Endothelial cell of umbilical vein (primary cell): ENCODE measurements at regions of chr3 and their contacts with region 1.

Region 1: GRCh38 chr3:38136777-38137614 is at the start of gene ACAA1:
- DNase-seq: peak; percentile 99
- H3K4me3 ChIP-seq: peak within 1 kb of the TSS; percentile 27 to 71 (median 67)
- H3K27ac ChIP-seq: peak within 1 kb of the TSS; percentile 45
- H3K4me1 ChIP-seq: peaks cover 24% of the 10 kb centered on the region
- H3K27me3 ChIP-seq: no peaks in the 10 kb centered on the region
- CTCF ChIP-seq: no peak
- POLR2A ChIP-seq: peak; percentile 90
- total RNA-seq, gene ACAA1: 46.9 and 52.1 TPM in 2 replicates

Region 2: GRCh38 chr3:37855363-37855970 is 281.5 kb before region 1 on chr3:
- CTCF ChIA-PET with region 1: no interaction called
- POLR2A ChIA-PET with region 1: no interaction called
- dilution Hi-C with region 1: no loop called
- intact Hi-C with region 1: loop called (anchors 10 kb)
- DNase-seq: peak; percentile 77
- H3K4me3 ChIP-seq: no peak overlapping the region
- H3K27ac ChIP-seq: no peak overlapping the region
- H3K4me1 ChIP-seq: peaks cover 9% of the 10 kb centered on the region
- H3K27me3 ChIP-seq: no peaks in the 10 kb centered on the region
- CTCF ChIP-seq: peak; percentile 86 to 87
- POLR2A ChIP-seq: no peak

Region 3: DNA sequence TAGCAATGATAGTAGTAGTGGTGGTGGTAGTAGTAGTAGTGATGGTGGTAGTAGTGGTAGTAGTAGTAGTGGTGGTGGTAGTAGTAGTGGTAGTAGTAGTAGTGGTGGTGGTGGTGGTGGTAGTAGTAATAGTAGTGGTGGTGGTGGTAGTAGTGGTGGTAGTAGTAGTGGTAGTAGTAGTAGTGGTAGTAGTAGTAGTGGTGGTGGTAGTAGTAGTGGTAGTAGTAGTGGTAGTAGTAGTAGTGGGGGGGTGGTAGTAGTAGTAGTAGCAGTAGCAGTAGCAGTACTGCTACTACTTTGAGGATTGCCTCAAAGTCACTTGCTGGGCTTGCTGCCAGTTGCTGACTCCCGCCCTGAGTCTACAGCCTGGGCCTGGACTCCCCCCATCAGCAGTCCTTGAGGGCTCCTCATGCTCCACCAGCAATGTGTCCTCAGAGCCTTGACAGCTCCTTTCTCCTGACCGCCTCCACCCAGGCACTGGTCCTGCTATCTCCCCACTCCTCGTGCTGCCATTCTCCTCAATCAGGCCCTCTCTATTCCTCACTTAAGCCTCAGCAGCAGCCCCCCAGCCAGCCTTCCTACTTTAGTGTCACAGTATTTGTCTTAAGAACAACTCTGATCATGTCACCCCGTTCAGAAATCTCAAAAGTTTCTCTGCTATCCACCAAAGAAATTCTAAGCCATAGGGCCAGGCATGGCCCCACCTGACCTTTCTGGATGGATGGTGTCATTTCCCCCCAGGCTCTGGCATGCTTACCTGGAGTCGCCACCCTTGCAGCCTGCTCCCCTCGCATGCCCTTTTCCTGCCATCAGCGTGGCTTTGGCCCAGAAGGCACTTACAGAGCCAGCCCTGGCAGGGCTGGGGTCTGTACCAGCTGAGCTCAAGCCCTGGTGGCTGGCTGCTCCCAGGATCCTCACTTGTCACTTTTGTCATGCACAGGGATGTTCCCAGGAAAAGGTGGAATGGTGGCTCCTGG is 52.4 kb before region 1 on chr3:
- CTCF ChIA-PET with region 1: no interaction called
- POLR2A ChIA-PET with region 1: no interaction called
- dilution Hi-C with region 1: no loop called
- intact Hi-C with region 1: no loop called
- DNase-seq: no peak
- H3K4me3 ChIP-seq: no peak overlapping the region
- H3K27ac ChIP-seq: no peak overlapping the region
- H3K4me1 ChIP-seq: no peaks in the 10 kb centered on the region
- H3K27me3 ChIP-seq: peaks cover 0 to 2% of the 10 kb centered on the region in 2 experiments
- CTCF ChIP-seq: no peak
- POLR2A ChIP-seq: no peak

Region 4: DNA sequence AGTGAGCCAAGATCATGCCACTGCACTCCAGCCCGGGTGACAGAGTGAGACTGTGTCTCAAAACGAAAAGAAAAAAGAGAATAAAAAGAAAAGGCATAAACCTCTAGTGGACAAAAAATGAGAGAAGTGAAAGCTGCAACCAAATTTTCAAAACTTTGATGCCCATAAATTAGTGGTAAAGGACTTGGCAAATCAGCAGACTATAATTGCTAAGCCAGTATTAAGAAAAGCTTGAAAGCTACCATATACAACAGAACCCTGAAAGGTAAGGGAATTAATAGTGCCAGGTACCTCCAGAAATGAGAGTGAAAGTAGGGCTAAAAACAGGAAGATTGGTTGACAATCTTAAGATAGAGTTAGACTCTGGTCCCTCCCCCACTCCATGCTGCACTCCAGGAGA is 95.7 kb after region 1 on chr3:
- CTCF ChIA-PET with region 1: no interaction called
- POLR2A ChIA-PET with region 1: no interaction called
- dilution Hi-C with region 1: no loop called
- intact Hi-C with region 1: loop called (anchors 5 kb)
- DNase-seq: no peak
- H3K4me3 ChIP-seq: no peak overlapping the region
- H3K27ac ChIP-seq: no peak overlapping the region
- H3K4me1 ChIP-seq: peaks cover 11% of the 10 kb centered on the region
- H3K27me3 ChIP-seq: no peaks in the 10 kb centered on the region
- CTCF ChIP-seq: no peak
- POLR2A ChIP-seq: no peak

Region 5: GRCh38 chr3:38297947-38298711 is 161.1 kb after region 1 on chr3:
- CTCF ChIA-PET with region 1: interaction called, 13 read pairs
- POLR2A ChIA-PET with region 1: no interaction called
- dilution Hi-C with region 1: no loop called
- intact Hi-C with region 1: loop called (anchors 5 kb)
- DNase-seq: peak; percentile 33
- H3K4me3 ChIP-seq: no peak overlapping the region
- H3K27ac ChIP-seq: no peak overlapping the region
- H3K4me1 ChIP-seq: no peaks in the 10 kb centered on the region
- H3K27me3 ChIP-seq: no peaks in the 10 kb centered on the region
- CTCF ChIP-seq: peak; percentile 26 to 36
- POLR2A ChIP-seq: no peak

Region 6: DNA sequence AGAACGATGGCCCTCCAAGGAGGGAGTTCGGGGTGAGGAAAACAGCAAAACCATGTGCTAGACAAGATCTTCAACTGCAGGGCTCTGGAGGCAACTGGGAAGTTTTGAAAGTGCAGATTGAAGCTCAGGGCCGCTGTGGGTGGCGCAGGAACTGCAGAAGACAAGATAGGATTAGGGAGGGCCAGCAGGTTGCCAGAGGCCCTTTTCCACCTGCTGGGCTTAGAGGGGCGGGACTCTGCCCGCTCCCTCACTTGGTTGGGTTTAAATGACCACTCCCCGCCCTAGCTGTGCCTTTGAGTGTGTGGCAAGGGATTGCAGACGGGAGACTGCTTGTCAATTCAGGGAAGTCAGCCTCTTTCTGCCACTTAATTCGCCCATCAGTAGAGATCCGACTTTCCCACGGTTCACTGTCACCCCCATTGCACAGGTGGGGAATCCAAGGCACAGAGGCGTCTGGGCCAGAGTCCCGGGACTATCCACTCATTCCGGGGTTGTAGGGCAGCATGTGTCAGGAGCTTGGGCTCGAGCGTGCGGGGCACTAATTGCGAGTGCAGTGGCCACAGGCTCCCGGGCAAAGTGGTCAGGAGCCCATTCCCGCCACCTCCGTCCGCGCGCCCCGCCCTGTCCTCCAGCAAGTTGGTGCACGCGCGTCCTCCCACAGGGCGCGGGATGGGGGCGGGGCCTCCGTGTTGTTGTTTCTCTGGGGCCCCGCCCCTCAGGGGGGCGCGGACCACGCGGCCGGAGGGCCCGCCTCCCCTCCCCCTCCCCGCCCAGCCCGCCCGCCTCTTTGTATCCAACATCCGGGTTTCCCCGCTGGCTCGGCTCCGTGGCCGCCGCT is 316.3 kb after region 1 on chr3 and contains the start of gene ACVR2B:
- CTCF ChIA-PET with region 1: interaction called, 4 read pairs
- POLR2A ChIA-PET with region 1: no interaction called
- dilution Hi-C with region 1: no loop called
- intact Hi-C with region 1: loop called (anchors 1 kb)
- DNase-seq: peak; percentile 69
- H3K4me3 ChIP-seq: peak within 1 kb of the TSS; percentile 37 to 85 (median 68)
- H3K27ac ChIP-seq: peak within 1 kb of the TSS; percentile 45
- H3K4me1 ChIP-seq: no peaks in the 10 kb centered on the region
- H3K27me3 ChIP-seq: no peaks in the 10 kb centered on the region
- CTCF ChIP-seq: no peak
- POLR2A ChIP-seq: no peak
- total RNA-seq, gene ACVR2B: 4.9 and 5.6 TPM in 2 replicates

Region 7: GRCh38 chr3:38496131-38496910 is 359.3 kb after region 1 on chr3 and contains the start of gene EXOG:
- CTCF ChIA-PET with region 1: interaction called, 5 read pairs
- POLR2A ChIA-PET with region 1: no interaction called
- dilution Hi-C with region 1: no loop called
- intact Hi-C with region 1: loop called (anchors 5 kb)
- DNase-seq: peak; percentile 93
- H3K4me3 ChIP-seq: peak within 1 kb of the TSS; percentile 73 to 84 (median 80)
- H3K27ac ChIP-seq: peak within 1 kb of the TSS; percentile 4
- H3K4me1 ChIP-seq: peaks cover 7% of the 10 kb centered on the region
- H3K27me3 ChIP-seq: no peaks in the 10 kb centered on the region
- CTCF ChIP-seq: peak; percentile 84 to 94
- POLR2A ChIP-seq: peak; percentile 77
- total RNA-seq, gene EXOG: 21.8 and 21.9 TPM in 2 replicates

Region 8: DNA sequence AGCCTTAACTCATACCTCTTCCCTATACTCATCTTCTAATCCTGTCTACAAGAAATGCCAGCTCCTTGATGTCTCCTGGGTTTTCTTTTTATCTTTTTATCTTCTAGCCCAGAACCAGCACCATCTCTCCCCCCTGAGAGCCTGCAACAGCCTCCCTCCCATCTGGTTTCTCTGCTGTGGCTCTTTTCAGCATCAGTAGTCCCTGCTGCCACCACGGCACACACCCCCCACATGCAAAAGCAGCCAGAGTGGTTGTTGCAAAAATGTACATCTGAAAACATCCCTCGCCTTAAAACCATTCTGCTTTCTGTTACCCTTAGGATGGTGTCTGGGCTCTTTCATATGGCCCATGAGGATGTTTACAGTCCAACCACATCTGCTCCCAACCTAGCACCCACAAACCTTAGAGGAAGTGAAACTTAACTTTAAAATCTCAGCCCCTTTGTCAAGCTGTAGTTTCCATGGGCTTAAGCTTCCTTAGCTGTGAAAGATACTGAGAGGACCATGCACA is 971.3 kb after region 1 on chr3:
- CTCF ChIA-PET with region 1: no interaction called
- POLR2A ChIA-PET with region 1: no interaction called
- dilution Hi-C with region 1: no loop called
- intact Hi-C with region 1: no loop called
- DNase-seq: no peak
- H3K4me3 ChIP-seq: peak overlapping the region in 2 of 3 experiments; percentile 69 to 78
- H3K27ac ChIP-seq: peak overlapping the region; percentile 75
- H3K4me1 ChIP-seq: peaks cover 18% of the 10 kb centered on the region
- H3K27me3 ChIP-seq: no peaks in the 10 kb centered on the region
- CTCF ChIP-seq: no peak
- POLR2A ChIP-seq: no peak